ENCODE measurements at regions of chr14 and their contacts with region 1.

Region 1: GRCh38 chr14:73173092-73173735 is 36.9 kb downstream of the PSEN1 start:
- DNase-seq: no peak
- H3K4me3 ChIP-seq: no peak overlapping the region
- H3K27ac ChIP-seq: no peak overlapping the region
- H3K4me1 ChIP-seq: no peaks in the 10 kb centered on the region
- H3K27me3 ChIP-seq: no peaks in the 10 kb centered on the region
- CTCF ChIP-seq: peak; percentile 70

Region 2: DNA sequence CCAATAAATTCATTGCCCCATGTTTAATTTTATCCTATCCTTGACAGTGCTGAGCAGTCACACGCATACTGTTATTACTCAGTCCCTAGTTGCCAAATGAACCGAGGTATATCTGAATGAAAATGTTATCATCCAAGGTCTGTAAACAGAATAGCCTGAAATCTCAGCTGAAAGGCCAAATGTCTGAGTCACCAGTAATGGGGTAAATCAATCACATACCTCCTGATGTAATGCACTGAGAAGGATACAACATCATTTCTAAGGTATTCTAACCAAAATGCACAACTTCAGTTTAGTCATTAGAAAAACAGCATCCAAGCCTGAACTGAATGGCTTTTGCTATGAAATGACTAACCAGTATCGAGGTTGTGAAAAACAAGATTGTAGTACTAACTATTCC is 508.0 kb before region 1 on chr14:
- CTCF ChIA-PET with region 1: no interaction called
- POLR2A ChIA-PET with region 1: no interaction called
- intact Hi-C with region 1: no loop called
- DNase-seq: no peak
- H3K4me3 ChIP-seq: no peak overlapping the region
- H3K27ac ChIP-seq: no peak overlapping the region
- H3K4me1 ChIP-seq: no peaks in the 10 kb centered on the region
- H3K27me3 ChIP-seq: peaks cover 13% of the 10 kb centered on the region; the same call in 1 of the 2 replicates
- CTCF ChIP-seq: no peak

Region 3: DNA sequence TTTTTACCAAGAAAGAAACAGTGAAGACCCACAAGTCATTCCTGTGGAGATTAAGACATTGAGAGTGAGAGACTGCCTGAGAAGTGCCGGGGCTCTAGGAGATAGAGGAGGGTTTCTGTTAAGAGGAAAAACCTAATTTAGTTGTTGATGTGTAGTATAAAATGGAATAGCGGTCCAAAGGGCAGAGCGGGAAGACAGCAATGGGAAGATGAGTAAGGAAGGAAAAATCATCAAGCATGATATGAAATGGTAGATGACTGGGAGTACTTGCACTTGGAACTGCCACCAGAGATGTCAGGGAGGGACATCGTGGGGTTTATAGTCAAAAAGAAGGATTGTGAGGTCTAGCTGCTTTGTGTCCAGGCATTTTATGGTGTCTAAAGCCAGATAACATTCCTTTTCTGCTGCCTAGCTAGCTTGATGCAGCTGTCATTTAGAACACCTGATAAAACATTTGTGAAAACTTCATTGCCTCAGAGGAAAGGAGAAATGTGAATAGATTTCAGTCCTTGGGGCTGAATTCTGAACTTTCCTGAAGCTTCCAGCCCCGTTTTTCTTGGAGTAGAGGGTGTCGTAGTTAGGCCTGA is 57.0 kb before region 1 on chr14:
- CTCF ChIA-PET with region 1: no interaction called
- POLR2A ChIA-PET with region 1: interaction called, 10 read pairs
- intact Hi-C with region 1: no loop called
- DNase-seq: no peak
- H3K4me3 ChIP-seq: no peak overlapping the region
- H3K27ac ChIP-seq: 0 out of 2 replicates have a peak overlapping the region, but pooled peaks have one; percentile 12
- H3K4me1 ChIP-seq: no peaks in the 10 kb centered on the region
- H3K27me3 ChIP-seq: no peaks in the 10 kb centered on the region
- CTCF ChIP-seq: no peak

Region 4: DNA sequence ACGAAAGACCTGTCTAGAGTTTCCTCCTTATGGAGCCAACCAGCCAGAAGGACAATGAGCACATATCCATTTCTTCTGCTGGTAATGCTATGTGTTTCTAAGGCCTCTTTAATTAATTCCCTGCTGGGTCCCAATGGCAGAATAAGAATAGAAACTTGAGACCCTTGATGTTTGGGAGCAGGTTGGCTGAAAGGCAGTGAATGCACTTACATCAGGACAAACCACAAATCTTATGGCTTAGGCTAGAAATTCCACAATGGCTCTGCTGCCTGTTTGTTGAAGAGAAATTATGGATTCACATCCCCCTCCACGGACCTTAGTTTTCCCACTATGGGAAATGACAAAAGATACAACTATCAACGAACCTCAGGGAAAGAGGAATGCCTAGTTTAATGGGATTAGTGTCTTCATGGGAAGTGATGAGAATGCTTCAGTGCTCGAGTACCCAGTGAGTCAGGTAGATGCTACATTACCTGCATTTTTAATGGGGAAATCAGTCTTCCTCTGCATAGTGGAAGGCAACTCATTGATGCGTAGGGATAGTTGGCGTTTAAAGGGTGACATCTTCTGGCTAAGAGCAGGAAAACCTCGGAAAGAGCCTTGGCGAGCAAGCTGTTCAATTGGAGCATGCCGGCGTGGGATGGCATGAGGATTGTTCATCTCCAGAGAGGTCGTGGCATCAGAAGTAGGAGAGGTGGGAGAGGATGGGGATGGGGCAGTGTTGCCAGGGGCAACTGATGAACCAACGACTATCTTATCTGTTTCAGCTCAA is 110.6 kb after region 1 on chr14:
- CTCF ChIA-PET with region 1: no interaction called
- POLR2A ChIA-PET with region 1: no interaction called
- intact Hi-C with region 1: loop called (anchors 10 kb)
- DNase-seq: no peak
- H3K4me3 ChIP-seq: no peak overlapping the region
- H3K27ac ChIP-seq: no peak overlapping the region
- H3K4me1 ChIP-seq: no peaks in the 10 kb centered on the region
- H3K27me3 ChIP-seq: no peaks in the 10 kb centered on the region
- CTCF ChIP-seq: no peak

Region 5: DNA sequence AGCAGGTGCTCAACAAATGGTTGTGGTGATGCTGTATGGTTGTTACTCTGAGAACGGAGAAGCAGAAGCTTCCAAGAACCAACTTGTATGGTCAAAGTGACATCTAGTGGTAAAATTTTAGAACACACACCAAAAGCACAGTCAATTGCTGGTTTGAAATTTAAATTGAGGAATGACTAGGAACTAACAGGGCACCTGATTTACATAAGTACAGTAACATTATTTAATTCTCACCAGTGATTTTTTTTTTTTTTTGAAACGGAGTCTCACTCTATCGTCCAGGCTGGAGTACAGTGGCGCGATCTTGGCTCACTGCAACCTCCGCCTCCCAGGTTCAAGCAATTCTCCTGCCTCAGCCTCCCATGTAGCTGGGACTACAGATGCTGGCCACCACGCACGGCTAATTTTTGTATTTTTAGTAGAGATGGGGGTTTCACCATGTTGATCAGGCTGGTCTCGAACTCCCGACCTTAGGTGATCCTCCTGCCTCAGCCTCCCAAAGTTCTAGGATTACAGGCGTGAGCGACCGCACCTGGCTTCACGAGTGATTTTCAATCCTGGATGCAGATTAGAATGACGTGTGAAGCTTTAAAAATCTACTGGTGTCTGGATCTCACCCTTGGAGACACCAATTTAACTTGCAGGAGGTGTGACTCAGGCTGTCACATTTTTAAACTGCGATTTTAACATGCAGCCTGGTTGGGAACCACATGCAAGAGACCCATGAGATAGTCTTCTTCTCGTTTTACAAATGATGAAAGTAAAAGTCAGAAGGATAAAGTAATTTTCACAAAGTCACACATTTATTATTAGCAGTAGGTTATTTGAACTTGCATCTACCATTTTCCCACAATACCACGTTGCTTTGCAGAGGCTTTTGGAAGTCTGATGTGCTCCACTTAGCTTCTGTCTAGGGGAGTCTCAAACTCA is 299.2 kb after region 1 on chr14:
- CTCF ChIA-PET with region 1: interaction called, 6 read pairs
- POLR2A ChIA-PET with region 1: no interaction called
- intact Hi-C with region 1: loop called (anchors 1 kb)
- DNase-seq: peak in 1 of 2 experiments; percentile 51
- H3K4me3 ChIP-seq: no peak overlapping the region
- H3K27ac ChIP-seq: no peak overlapping the region
- H3K4me1 ChIP-seq: no peaks in the 10 kb centered on the region
- H3K27me3 ChIP-seq: no peaks in the 10 kb centered on the region
- CTCF ChIP-seq: peak; percentile 77